Cardiac septum (tissue), 1 donor: ENCODE measurements at regions of chr2 and their contacts with region 1.

Region 1: GRCh38 chr2:29309090-29310029 is 194.1 kb downstream of the CLIP4 start:
- DNase-seq: no peak

Region 2: DNA sequence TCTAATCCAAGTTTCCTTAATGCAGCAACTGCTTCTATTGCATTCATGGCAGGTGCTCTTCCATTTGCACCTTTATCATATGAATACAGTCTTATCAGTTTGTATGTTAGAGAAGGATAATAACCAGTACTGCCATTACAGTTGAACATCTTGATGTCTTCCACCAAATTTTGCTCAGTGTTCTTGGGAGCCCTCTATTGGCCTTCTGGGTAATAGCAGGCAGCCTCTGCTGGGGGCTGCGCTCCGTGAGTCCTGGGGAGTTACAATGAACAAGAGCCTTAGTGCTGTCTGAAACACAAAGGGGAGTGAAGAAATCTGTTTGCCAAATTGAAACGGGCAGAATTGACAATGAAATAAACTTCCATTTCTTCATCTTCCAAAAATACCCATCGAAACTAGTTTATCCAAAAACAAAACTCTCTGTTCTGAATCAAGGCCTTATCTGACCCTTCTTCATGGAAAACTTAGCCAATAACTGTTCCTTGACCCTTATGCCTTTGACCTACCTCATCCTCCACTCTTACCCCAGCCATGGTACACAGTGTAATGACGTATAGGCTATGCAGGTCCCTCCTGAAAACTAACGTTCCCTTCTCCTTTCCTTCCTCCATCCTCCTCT is 532.1 kb after region 1 on chr2:
- intact Hi-C with region 1: loop called (anchors 5 kb)
- DNase-seq: no peak